Naive thymus-derived CD4-positive, alpha-beta T cell (primary cell): ENCODE measurements at regions of chr15 and their contacts with region 1.

Region 1: GRCh38 chr15:57045741-57046382 is 127.4 kb downstream of the TCF12 start:
- DNase-seq: no peak
- ATAC-seq: no peak
- H3K4me3 ChIP-seq: no peak overlapping the region
- H3K4me3 Mint-ChIP-seq: peak overlapping the region in 1 of 10 donors; percentile 8
- H3K27ac ChIP-seq: no peak overlapping the region
- H3K27ac Mint-ChIP-seq: peak overlapping the region in 1 of 9 donors; percentile 33
- H3K4me1 ChIP-seq: no peaks in the 10 kb centered on the region
- H3K4me1 Mint-ChIP-seq: peaks cover 4 to 81% (median 60%) of the 10 kb centered on the region in 7 donors
- H3K27me3 ChIP-seq: no peaks in the 10 kb centered on the region
- H3K27me3 Mint-ChIP-seq: no peaks in the 10 kb centered on the region

Region 2: DNA sequence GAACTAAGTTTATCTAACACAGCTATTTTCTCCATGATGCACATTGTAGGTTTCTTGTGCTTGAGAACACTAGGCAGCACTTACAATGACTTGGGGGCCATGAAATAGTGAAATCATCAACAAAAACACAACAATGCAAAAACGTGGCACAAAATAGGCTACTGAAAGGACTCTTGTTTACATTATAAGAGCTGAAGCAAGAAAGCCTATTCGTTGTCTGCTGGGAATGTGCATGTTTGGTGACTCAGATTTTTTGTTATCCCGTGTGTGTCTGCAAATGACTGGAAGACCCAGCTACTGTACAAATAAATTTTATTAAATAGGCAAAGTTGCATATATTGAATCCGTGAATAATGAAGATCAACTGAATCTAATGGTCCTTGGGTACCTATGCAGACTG is 42.4 kb before region 1 on chr15:
- CTCF ChIA-PET with region 1: no interaction called
- POLR2A ChIA-PET with region 1: no interaction called
- intact Hi-C with region 1: no loop called
- DNase-seq: no peak
- ATAC-seq: no peak
- H3K4me3 ChIP-seq: no peak overlapping the region
- H3K4me3 Mint-ChIP-seq: no peak overlapping the region
- H3K27ac ChIP-seq: no peak overlapping the region
- H3K27ac Mint-ChIP-seq: no peak overlapping the region
- H3K4me1 ChIP-seq: no peaks in the 10 kb centered on the region
- H3K4me1 Mint-ChIP-seq: peaks cover 6 to 60% (median 38%) of the 10 kb centered on the region in 7 donors
- H3K27me3 ChIP-seq: no peaks in the 10 kb centered on the region
- H3K27me3 Mint-ChIP-seq: no peaks in the 10 kb centered on the region

Region 3: GRCh38 chr15:57060799-57061198 is 14.9 kb after region 1 on chr15:
- CTCF ChIA-PET with region 1: no interaction called
- POLR2A ChIA-PET with region 1: no interaction called
- intact Hi-C with region 1: loop called in 1 of 2 experiments (anchors 2 kb)
- DNase-seq: no peak
- ATAC-seq: no peak
- H3K4me3 ChIP-seq: no peak overlapping the region
- H3K4me3 Mint-ChIP-seq: no peak overlapping the region
- H3K27ac ChIP-seq: no peak overlapping the region
- H3K27ac Mint-ChIP-seq: no peak overlapping the region
- H3K4me1 ChIP-seq: peaks cover 0 to 5% of the 10 kb centered on the region in 2 donors
- H3K4me1 Mint-ChIP-seq: peaks cover 10 to 56% (median 42%) of the 10 kb centered on the region in 7 donors
- H3K27me3 ChIP-seq: no peaks in the 10 kb centered on the region
- H3K27me3 Mint-ChIP-seq: no peaks in the 10 kb centered on the region